ENCODE measurements at regions of chr9 and their contacts with region 1.

Region 1: GRCh38 chr9:104747558-104748358 is at the start of gene NIPSNAP3A:
- DNase-seq: peak; percentile 90
- CTCF ChIP-seq: no peak

Region 2: GRCh38 chr9:104765138-104765537 is 17.4 kb after region 1 on chr9:
- CTCF ChIA-PET with region 1: interaction called, 10 read pairs
- POLR2A ChIA-PET with region 1: interaction called, 3 read pairs
- DNase-seq: no peak
- CTCF ChIP-seq: no peak

Region 3: GRCh38 chr9:104774831-104775573 is 27.2 kb after region 1 on chr9:
- CTCF ChIA-PET with region 1: no interaction called
- POLR2A ChIA-PET with region 1: interaction called, 10 read pairs
- DNase-seq: peak; percentile 52
- CTCF ChIP-seq: no peak